Pancreas (tissue), 10 donors: ENCODE measurements at regions of chr7 and their contacts with region 1.

Region 1: GRCh38 chr7:80659120-80660055 is 20.9 kb downstream of the CD36 start:
- DNase-seq: no peak
- ATAC-seq: peak in 3 of 4 donors; percentile 75 to 78 (median 75)
- H3K4me3 ChIP-seq: no peak overlapping the region
- H3K27ac ChIP-seq: no peak overlapping the region
- H3K4me1 ChIP-seq: peaks cover 0 to 3% (median 3%) of the 10 kb centered on the region in 3 donors
- H3K27me3 ChIP-seq: no peaks in the 10 kb centered on the region
- CTCF ChIP-seq: peak in 3 of 4 donors; percentile 44 to 52 (median 47)

Region 2: GRCh38 chr7:80432166-80432565 is 227.2 kb before region 1 on chr7:
- intact Hi-C with region 1: loop called (anchors 5 to 10 kb)
- DNase-seq: no peak
- ATAC-seq: no peak
- H3K4me3 ChIP-seq: no peak overlapping the region
- H3K27ac ChIP-seq: no peak overlapping the region
- H3K4me1 ChIP-seq: no peaks in the 10 kb centered on the region
- H3K27me3 ChIP-seq: peaks cover 0 to under 1% (median 0%) of the 10 kb centered on the region in 4 donors
- CTCF ChIP-seq: no peak

Region 3: DNA sequence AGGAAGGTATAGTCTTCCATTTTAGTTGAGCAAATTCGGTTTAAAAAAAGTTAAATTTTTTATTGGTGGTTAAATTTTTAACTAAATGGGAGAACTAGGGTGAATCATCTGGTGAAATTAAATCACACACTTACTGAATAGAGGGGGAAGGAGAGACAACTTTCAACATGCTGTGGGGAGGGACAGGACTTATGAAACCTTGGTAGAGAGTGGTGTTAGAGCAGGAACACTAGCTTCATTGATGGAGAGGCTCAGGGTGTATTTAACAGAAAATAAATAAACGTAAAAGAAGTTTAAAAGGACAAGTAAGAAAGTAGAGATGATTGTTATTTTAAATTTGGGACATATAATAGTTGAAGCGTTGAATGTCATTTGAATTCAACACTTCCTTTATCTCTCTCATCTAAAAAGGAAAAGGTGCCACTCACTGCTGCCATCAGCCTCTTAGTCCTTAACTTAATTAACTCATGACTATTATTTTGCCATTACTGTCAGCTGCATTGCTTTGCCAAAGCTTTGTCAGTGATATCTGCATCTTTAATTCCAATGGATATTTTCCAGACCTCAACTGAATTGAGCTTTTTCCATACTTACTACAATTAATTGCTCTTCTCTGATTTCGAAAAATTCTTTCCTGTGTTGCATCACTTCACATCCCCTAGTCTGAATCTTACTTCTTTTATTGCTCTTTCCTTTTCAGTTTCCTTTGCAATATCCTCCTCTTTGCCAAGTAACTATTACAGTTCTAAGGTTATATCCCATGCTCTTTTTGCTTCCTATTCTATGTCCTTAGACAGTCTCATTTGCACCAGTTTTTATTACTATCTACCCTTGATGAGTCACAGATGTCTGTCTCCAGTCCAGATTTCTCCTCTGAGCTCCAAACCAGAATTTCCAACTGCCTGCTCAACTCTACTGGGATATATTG is 219.2 kb before region 1 on chr7:
- intact Hi-C with region 1: loop called in 2 of 3 experiments (anchors 5 to 10 kb)
- DNase-seq: no peak
- ATAC-seq: peak in 3 of 4 donors; percentile 19 to 69 (median 52)
- H3K4me3 ChIP-seq: no peak overlapping the region
- H3K27ac ChIP-seq: no peak overlapping the region
- H3K4me1 ChIP-seq: no peaks in the 10 kb centered on the region
- H3K27me3 ChIP-seq: no peaks in the 10 kb centered on the region
- CTCF ChIP-seq: no peak

Region 4: GRCh38 chr7:80584778-80585177 is 74.6 kb before region 1 on chr7:
- intact Hi-C with region 1: no loop called
- DNase-seq: peak in 2 of 6 donors; percentile 33 to 46
- ATAC-seq: peak; percentile 89 to 94 (median 92)
- H3K4me3 ChIP-seq: no peak overlapping the region
- H3K27ac ChIP-seq: no peak overlapping the region
- H3K4me1 ChIP-seq: peaks cover 0 to 2% (median 0%) of the 10 kb centered on the region in 3 donors
- H3K27me3 ChIP-seq: no peaks in the 10 kb centered on the region
- CTCF ChIP-seq: no peak

Region 5: GRCh38 chr7:80711531-80711930 is 52.1 kb after region 1 on chr7:
- intact Hi-C with region 1: no loop called
- DNase-seq: no peak
- ATAC-seq: no peak
- H3K4me3 ChIP-seq: no peak overlapping the region
- H3K27ac ChIP-seq: no peak overlapping the region
- H3K4me1 ChIP-seq: no peaks in the 10 kb centered on the region
- H3K27me3 ChIP-seq: no peaks in the 10 kb centered on the region
- CTCF ChIP-seq: no peak